Esophagus muscularis mucosa (tissue), 4 donors: ENCODE measurements at regions of chr15 and their contacts with region 1.

Region 1: DNA sequence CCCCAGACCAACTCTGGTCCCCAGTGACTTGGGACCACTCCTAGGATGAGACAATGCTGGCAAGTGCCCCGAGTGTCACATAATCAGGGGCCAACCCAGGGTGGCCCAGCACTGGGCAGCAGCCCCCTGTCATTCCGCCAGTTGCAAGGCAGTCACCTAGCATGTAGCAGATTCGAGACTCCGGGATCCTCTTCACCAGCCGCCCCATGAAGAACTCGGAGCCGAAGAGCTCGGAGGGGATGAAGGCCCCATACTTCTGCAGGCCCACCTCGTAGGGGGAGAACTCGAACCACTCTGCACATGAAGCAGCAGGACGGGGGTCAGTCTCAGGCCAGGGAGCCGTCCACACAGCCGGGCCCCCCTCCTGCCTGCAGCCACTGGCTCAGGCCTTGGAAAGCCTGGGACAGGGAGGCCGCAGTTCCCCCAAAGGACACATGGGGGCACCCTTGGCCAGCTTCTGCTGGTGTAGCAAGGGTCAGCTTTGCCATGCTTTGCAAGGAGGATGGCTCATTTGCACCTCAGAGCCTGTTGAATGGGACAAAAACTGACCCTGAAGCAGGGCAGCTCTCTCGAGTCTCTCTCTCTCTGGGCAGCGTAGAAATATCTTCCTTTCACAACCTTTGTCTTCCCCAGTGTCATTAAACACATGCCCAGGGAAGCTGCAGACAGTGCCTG is 17.0 kb upstream of the EHD4 start:
- DNase-seq: no peak
- H3K4me3 ChIP-seq: no peak overlapping the region
- H3K27ac ChIP-seq: no peak overlapping the region
- H3K4me1 ChIP-seq: no peaks in the 10 kb centered on the region
- H3K27me3 ChIP-seq: no peaks in the 10 kb centered on the region
- CTCF ChIP-seq: peak in 2 of 3 experiments; percentile 94 to 95
- EP300 ChIP-seq: no peak
- POLR2A ChIP-seq: no peak

Region 2: DNA sequence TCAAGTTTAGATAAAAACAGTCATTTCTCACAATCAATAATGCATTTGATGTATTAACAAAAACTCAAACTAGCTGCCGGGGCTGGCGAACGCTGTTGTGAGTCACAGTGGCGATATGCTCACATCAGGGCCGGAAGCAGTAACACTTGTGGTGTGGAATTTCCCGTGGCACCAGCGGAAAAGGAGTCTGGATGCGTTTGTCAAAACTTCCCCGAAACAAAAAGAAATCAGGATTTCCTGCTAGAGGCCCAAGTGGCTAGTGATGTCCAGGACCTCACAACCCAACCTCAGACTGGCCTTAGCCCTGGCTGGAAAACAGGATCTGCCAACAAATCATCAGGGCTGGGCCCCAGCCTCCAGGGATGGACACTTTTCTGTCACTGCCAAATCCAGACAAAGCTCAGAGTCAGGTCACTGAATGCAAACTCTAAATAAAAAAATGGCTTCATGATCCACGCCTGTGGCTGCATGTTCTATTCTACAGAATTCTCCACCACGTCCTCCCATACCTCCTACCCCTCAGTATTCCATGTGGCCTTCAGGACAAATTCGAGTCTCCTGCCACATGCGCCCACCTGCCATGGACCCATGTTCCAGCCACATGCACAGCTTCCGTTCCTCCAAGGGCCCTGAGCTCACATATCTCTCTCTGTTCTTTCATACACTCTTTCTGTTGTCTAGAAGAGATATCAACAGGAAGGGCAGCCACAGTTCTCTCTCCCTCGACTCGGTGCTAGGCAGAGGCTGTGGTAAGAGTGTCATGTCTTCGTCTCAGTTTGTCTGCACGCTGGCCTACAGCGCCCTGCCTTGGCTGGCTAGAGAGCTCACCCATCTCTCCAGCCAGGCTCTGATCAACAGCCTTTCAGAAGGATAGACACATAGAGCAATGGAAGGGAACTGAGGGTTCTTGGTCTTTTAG is 52.5 kb before region 1 on chr15:
- intact Hi-C with region 1: no loop called
- DNase-seq: no peak
- H3K4me3 ChIP-seq: no peak overlapping the region
- H3K27ac ChIP-seq: peak overlapping the region in 3 of 4 donors; percentile 65 to 77 (median 66)
- H3K4me1 ChIP-seq: peaks cover 53 to 74% (median 60%) of the 10 kb centered on the region in 4 donors
- H3K27me3 ChIP-seq: no peaks in the 10 kb centered on the region
- CTCF ChIP-seq: no peak
- EP300 ChIP-seq: peak; percentile 31
- POLR2A ChIP-seq: no peak

Region 3: DNA sequence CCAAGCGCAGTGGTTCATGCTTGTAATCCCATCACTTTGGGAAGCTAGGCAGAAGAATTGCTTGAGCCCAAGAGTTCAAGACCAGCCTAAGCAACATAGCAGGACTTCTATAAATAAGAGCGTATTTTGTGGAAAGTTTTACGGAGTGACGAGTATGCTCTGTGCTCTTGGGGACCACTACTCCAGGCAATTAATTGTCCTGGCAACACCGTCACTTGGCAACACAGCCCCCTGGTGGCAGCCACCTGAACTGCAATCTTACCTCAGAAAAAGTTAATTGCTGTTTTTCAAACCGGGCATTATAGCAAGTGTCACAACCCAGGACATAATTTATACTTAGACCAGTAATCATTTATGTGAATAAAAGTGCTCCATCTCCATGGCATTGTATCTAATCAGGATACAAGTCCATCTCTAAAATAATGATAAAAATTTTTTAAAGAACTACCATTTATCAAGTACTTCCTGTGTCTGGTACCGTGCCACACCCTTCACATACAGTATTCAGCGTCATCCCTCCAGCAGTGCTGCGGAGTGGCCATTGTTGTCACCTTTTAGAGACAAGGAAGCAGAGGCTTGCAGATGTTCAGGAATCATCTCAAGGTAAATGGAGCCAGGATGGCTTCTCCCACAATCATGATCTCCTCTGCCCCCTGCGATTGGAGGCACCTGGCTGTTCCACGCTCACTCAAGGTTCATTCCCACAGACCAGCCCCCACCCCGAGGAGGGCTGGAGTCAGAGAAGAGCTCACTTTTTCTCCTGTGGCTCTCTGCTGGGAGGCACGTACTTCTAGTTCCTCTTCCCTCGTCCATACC is 70.5 kb after region 1 on chr15:
- intact Hi-C with region 1: loop called (anchors 2 kb)
- DNase-seq: no peak
- H3K4me3 ChIP-seq: no peak overlapping the region
- H3K27ac ChIP-seq: no peak overlapping the region
- H3K4me1 ChIP-seq: peaks cover 4 to 10% (median 9%) of the 10 kb centered on the region in 4 donors
- H3K27me3 ChIP-seq: peaks cover 0 to 25% (median 0%) of the 10 kb centered on the region in 4 donors
- CTCF ChIP-seq: peak; percentile 71 to 82 (median 79)
- EP300 ChIP-seq: no peak
- POLR2A ChIP-seq: no peak

Region 4: GRCh38 chr15:42084460-42085235 is 95.3 kb after region 1 on chr15:
- intact Hi-C with region 1: loop called (anchors 2 kb)
- DNase-seq: no peak
- H3K4me3 ChIP-seq: no peak overlapping the region
- H3K27ac ChIP-seq: no peak overlapping the region
- H3K4me1 ChIP-seq: peaks cover 0 to 8% (median 6%) of the 10 kb centered on the region in 4 donors
- H3K27me3 ChIP-seq: peaks cover 0 to 64% (median 0%) of the 10 kb centered on the region in 4 donors
- CTCF ChIP-seq: peak; percentile 81 to 98 (median 84)
- EP300 ChIP-seq: no peak
- POLR2A ChIP-seq: no peak

Region 5: DNA sequence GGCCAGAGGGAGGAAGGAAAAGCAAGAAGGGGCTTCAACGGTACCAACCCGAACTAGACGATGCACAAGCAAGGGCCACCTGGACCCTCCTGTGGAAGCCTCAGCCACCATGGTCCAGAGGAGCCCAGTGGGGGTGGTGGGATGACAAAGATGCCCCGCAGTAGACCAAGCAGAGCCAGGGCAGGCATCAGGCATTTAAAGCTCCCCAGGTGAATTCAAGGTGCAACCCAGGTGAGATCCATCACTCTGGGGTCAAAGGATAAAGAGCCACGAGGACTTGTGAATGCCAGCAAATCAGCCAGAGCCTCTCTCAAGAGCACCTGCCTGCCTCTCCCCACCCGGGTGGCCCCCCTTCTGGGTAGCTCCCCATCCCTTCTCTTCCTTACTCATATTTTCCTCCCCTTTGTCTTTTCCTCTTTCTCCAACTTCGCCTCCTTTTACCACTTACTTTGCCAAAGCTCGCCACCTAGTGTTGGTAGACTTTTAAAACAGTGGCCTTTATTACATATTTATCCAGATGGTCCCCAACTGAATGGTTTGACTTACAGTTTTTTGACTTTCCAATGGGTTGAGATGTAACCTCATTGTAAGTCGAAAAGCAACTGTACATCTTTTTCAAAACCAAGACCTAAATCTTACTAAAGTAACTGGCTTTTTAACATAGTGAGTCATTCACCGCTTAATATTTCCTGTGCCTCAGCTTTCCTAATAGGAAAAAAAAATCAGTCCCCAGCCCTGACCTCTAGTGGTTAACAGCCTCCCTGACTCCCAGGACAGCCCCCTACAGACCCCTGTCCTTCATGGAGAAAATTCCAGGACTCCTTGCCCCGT is 148.2 kb after region 1 on chr15:
- intact Hi-C with region 1: loop called (anchors 2 kb)
- DNase-seq: no peak
- H3K4me3 ChIP-seq: no peak overlapping the region
- H3K27ac ChIP-seq: no peak overlapping the region
- H3K4me1 ChIP-seq: no peaks in the 10 kb centered on the region
- H3K27me3 ChIP-seq: no peaks in the 10 kb centered on the region
- CTCF ChIP-seq: peak; percentile 28 to 55 (median 48)
- EP300 ChIP-seq: no peak
- POLR2A ChIP-seq: no peak